ENCODE measurements at regions of chr6 and their contacts with region 1.

Region 1: DNA sequence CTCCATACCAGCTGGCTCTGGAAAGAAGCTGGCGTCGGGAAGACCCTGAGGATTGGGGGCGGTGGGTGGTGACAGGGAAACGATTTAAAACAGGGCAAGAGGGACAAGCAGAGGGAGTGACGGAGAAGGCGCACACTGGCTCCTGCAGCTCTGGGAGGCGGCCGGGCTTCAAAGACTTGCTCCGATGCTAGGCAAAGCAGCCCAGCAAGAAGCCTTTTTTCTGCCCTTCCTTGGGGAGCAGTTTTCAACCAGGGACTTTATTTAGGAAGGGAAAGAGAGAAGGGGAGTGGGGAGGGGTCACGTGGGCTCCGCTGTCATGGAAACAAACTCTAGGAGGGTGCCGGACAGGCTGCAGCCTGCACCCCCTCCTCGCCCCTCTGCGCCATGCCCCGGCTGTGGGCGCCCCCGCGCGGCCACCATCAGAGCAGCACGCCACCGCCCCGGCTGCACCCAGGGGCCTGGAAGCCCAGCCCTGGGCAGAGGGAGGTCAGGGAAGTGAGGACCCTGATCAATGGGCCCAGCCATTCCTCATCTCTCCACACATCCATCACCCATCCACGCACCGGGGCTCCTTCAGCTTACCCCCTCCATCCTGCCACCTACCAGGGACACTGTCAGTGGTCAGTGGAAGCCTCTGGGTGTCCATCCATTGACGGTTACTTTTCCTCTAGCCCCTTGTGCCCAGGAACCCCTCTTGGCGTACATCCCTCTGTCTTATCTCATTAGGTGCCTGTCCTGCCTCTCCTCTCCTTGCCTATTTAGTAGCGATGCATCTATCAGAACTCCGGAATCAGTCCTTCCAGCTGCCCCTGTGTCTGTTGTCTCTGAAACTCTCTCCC is 66.6 kb upstream of the CCDC167 start:
- DNase-seq: peak; percentile 84
- ATAC-seq: peak; percentile 64
- H3K4me3 ChIP-seq: peak overlapping the region; percentile 17 to 52 (median 44)
- H3K4me3 Mint-ChIP-seq: peak overlapping the region; percentile 70
- H3K27ac ChIP-seq: no peak overlapping the region
- H3K27ac Mint-ChIP-seq: peak overlapping the region; percentile 54
- H3K4me1 ChIP-seq: peaks cover 56 to 67% of the 10 kb centered on the region in 2 donors
- H3K4me1 Mint-ChIP-seq: peaks cover 66% of the 10 kb centered on the region
- H3K27me3 ChIP-seq: no peaks in the 10 kb centered on the region
- H3K27me3 Mint-ChIP-seq: no peaks in the 10 kb centered on the region
- CTCF ChIP-seq: peak; percentile 95

Region 2: DNA sequence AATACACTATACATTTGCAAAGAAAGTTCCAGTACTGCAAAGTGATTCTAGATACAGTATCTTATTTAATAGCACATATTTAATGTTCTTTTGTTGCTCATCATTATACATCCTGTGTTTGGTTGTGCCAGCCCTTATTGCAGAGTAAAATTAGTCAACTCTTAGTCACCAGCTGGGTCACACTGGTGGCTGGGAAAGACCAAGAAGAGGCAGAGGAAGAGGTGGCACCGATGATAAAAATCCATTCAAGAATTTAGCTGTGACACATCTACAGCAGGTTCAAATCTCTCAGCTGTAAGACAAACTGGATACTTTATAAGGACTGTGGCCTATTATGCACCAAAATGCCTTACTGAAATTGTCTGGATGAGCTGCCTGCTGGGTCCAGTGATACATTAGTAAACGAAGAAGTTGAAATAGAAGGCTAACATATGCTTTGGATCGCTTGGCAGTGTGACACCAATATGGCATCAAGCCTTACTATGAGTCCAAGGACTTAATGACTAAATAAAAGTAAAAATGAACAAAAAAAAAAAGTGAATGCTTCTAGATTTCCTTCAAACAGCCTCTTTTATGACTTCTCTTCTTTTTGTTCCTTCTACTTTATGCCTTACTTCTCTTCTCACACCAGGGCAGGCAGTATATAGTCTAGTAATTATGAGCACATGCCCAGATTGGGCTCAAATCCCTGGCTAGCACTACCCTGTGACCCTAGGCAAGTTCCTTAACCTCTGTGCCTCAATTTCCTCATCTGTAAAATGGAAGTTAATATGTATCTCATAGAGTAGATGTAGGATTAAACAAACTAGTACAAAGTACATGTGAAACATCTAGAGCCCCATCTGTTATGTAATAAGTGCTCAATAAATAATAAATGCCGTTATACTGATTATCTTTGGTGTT is 241.9 kb before region 1 on chr6:
- CTCF ChIA-PET with region 1: interaction called, 24 read pairs
- POLR2A ChIA-PET with region 1: no interaction called
- intact Hi-C with region 1: loop called (anchors 1 kb)
- DNase-seq: no peak
- ATAC-seq: no peak
- H3K4me3 ChIP-seq: no peak overlapping the region
- H3K4me3 Mint-ChIP-seq: no peak overlapping the region
- H3K27ac ChIP-seq: no peak overlapping the region
- H3K27ac Mint-ChIP-seq: no peak overlapping the region
- H3K4me1 ChIP-seq: no peaks in the 10 kb centered on the region
- H3K4me1 Mint-ChIP-seq: peaks cover 2% of the 10 kb centered on the region
- H3K27me3 ChIP-seq: no peaks in the 10 kb centered on the region
- H3K27me3 Mint-ChIP-seq: no peaks in the 10 kb centered on the region
- CTCF ChIP-seq: no peak

Region 3: GRCh38 chr6:37489660-37490361 is 76.5 kb before region 1 on chr6:
- CTCF ChIA-PET with region 1: interaction called, 47 read pairs
- POLR2A ChIA-PET with region 1: no interaction called
- intact Hi-C with region 1: no loop called
- DNase-seq: peak; percentile 37
- ATAC-seq: peak; percentile 53
- H3K4me3 ChIP-seq: no peak overlapping the region
- H3K4me3 Mint-ChIP-seq: no peak overlapping the region
- H3K27ac ChIP-seq: peak overlapping the region in 1 of 2 donors; percentile 60
- H3K27ac Mint-ChIP-seq: peak overlapping the region; percentile 75
- H3K4me1 ChIP-seq: peaks cover 3 to 27% of the 10 kb centered on the region in 2 donors
- H3K4me1 Mint-ChIP-seq: peaks cover 22% of the 10 kb centered on the region
- H3K27me3 ChIP-seq: no peaks in the 10 kb centered on the region
- H3K27me3 Mint-ChIP-seq: no peaks in the 10 kb centered on the region
- CTCF ChIP-seq: peak; percentile 29

Region 4: DNA sequence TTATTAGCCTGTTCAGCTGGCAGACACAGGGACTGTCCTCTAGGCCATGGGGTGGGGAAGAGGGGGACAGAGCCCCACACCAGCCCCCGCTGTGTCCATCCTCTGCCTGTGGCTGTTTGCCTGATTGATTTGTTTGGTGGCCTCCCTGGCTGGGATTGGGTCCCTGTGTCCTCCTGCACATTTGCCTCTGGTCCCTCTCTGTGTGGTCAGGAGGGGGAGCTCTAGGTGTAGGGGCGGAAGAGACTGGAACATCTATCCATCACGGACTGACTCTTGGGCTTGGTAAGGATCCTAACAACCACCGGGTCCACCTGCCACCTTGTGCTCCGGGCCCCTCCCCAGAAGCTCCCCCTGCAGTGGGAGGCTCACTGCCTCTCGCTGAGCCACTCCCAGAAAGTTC is 28.2 kb before region 1 on chr6:
- CTCF ChIA-PET with region 1: interaction called, 179 read pairs
- POLR2A ChIA-PET with region 1: interaction called, 22 read pairs
- intact Hi-C with region 1: loop called (anchors 1 kb)
- DNase-seq: no peak
- ATAC-seq: no peak
- H3K4me3 ChIP-seq: no peak overlapping the region
- H3K4me3 Mint-ChIP-seq: peak overlapping the region; percentile 34
- H3K27ac ChIP-seq: no peak overlapping the region
- H3K27ac Mint-ChIP-seq: peak overlapping the region; percentile 32
- H3K4me1 ChIP-seq: peaks cover 30 to 56% of the 10 kb centered on the region in 2 donors
- H3K4me1 Mint-ChIP-seq: peaks cover 15% of the 10 kb centered on the region
- H3K27me3 ChIP-seq: peaks cover 0 to 34% (median 9%) of the 10 kb centered on the region in 4 experiments
- H3K27me3 Mint-ChIP-seq: peaks cover 13% of the 10 kb centered on the region
- CTCF ChIP-seq: no peak

Region 5: GRCh38 chr6:37554480-37554819 is 11.9 kb before region 1 on chr6:
- CTCF ChIA-PET with region 1: interaction called, 26 read pairs
- POLR2A ChIA-PET with region 1: interaction called, 6 read pairs
- intact Hi-C with region 1: loop called (anchors 1 kb)
- DNase-seq: no peak
- ATAC-seq: no peak
- H3K4me3 ChIP-seq: no peak overlapping the region
- H3K4me3 Mint-ChIP-seq: peak overlapping the region; percentile 53
- H3K27ac ChIP-seq: peak overlapping the region in 1 of 2 donors; percentile 74
- H3K27ac Mint-ChIP-seq: peak overlapping the region; percentile 72
- H3K4me1 ChIP-seq: peaks cover 91 to 95% of the 10 kb centered on the region in 2 donors
- H3K4me1 Mint-ChIP-seq: peaks cover 82% of the 10 kb centered on the region
- H3K27me3 ChIP-seq: no peaks in the 10 kb centered on the region
- H3K27me3 Mint-ChIP-seq: no peaks in the 10 kb centered on the region
- CTCF ChIP-seq: no peak

Region 6: DNA sequence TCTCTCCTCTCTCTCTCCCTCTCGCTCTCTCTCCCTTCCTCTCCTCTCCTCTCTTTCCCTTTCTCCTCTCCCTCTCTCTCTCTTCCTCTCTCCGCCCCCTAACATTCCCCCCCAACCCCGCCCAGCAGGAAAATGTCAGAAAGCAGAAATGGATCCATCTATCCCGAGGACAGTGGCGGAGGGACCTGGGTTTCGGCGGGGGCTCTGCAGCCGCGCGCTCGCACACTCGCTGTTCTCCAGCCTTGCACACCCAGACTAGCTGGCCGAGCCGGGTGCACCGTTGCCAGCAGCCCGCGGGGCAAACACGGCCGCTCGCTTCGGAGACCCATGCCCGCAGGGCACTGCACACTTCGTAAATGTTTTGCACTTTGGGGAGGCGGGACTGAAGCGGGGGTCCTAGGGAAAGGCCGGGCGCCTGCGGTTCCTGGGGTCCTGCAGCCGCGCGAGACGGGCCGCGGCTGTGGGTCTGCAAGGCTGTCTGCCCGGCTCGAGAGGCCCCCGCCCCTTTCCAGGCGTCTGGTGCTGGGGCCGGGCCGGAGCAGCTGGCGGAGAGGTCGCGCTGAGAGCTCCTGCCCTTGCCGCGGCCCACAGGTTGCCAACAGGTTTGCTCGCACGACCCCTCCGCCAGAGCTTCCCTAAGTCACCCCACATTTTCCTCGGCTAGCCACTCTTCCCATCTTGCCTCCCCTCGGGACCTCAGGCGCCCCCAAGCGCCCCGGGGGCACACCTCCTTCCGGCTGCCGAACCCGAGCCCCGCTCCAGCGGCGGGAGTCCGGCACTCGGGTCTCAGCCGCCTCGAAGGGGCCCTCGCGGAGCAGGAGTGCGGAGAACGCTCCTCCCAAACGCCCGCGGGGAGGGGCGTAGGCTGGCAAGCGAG is 132.2 kb after region 1 on chr6:
- CTCF ChIA-PET with region 1: interaction called, 6 read pairs
- POLR2A ChIA-PET with region 1: interaction called, 4 read pairs
- intact Hi-C with region 1: loop called (anchors 1 kb)
- DNase-seq: peak; percentile 83
- ATAC-seq: peak; percentile 37
- H3K4me3 ChIP-seq: peak overlapping the region; percentile 40 to 72 (median 60)
- H3K4me3 Mint-ChIP-seq: peak overlapping the region; percentile 88
- H3K27ac ChIP-seq: no peak overlapping the region
- H3K27ac Mint-ChIP-seq: peak overlapping the region; percentile 90
- H3K4me1 ChIP-seq: peaks cover 24 to 25% of the 10 kb centered on the region in 2 donors
- H3K4me1 Mint-ChIP-seq: peaks cover 26% of the 10 kb centered on the region
- H3K27me3 ChIP-seq: peaks cover 0 to 37% (median 18%) of the 10 kb centered on the region in 4 experiments
- H3K27me3 Mint-ChIP-seq: peaks cover 27% of the 10 kb centered on the region
- CTCF ChIP-seq: no peak